IMR-90 (cell line): ENCODE measurements at regions of chr2 and their contacts with region 1.

Region 1: DNA sequence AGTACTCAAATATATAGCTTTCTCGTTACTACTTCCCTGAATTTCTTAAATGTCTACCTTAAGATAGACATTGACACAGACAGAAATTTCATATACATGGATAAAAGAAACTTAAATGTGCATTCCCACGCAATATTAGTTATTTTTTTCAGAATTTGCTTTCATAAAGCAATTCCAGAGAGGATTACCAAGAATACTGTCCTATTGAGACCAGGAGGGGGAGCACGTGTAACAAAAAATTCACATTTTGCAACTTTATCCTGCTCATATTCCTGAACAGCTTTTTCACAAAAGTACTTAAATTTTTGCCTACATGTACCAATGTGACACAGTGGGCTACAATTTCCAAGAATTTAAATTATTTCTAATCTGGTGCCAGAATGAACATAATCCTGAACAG is 30.7 kb upstream of the ERCC3 start:
- DNase-seq: peak; percentile 68
- ATAC-seq: peak; percentile 28; the same call in 1 of the 2 replicates
- H3K4me3 ChIP-seq: no peak overlapping the region
- H3K27ac ChIP-seq: no peak overlapping the region
- H3K4me1 ChIP-seq: peaks cover 3% of the 10 kb centered on the region
- H3K27me3 ChIP-seq: no peaks in the 10 kb centered on the region
- CTCF ChIP-seq: peak; percentile 70
- POLR2A ChIP-seq: no peak
- RAD21 ChIP-seq: peak; percentile 71

Region 2: DNA sequence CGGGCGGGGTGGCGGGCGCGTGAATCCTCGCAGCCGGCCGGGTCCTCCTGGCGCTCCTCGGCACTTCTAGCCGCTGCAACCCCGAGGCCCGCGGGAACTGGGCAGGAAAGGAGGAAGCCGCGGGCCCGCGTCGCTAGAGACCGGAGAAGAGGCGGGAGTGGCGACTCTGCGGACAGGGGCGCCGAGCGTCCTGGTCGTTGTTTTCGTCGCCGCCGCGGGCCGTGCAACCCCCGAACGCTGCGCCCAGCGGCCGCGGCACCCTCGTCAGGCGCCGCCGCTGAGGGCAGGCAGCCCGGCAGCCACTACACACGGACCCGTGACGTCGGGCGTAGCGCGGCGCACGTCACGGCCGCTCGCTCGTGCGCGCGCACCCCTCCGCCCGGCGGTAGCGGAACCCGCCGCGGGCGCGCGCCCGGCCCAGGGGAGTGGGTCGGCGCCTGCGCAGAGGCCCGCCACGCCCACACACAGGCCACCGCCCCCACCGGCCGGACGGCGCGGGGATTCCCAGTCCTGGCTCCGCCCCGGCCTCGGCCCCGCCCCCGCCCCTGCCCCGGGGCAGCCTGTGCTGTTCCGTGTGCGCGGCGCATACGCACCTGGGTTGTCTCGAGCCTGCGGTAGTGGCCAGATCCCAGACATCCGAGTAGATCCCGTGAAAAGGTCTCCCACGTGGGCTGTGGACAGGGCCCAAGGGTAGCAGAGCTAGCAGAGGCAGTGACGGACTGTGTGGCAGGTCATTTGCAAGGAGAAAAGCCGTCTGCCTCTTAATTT is 63.2 kb after region 1 on chr2 and contains the start of gene MAP3K2:
- CTCF ChIA-PET with region 1: no interaction called
- POLR2A ChIA-PET with region 1: no interaction called
- dilution Hi-C with region 1: no loop called
- in situ Hi-C with region 1: no loop called
- intact Hi-C with region 1: loop called (anchors 1 kb)
- DNase-seq: peak; percentile 90
- ATAC-seq: peak; percentile 92
- H3K4me3 ChIP-seq: peak within 1 kb of the TSS; percentile 98
- H3K27ac ChIP-seq: peak within 1 kb of the TSS; percentile 95
- H3K4me1 ChIP-seq: peaks cover 5% of the 10 kb centered on the region
- H3K27me3 ChIP-seq: no peaks in the 10 kb centered on the region
- CTCF ChIP-seq: peak; percentile 8; the same call in 1 of the 2 replicates
- POLR2A ChIP-seq: peak; percentile 95
- RAD21 ChIP-seq: no peak; the same call in 1 of the 2 replicates
- total RNA-seq, gene MAP3K2: 30.8 and 31.9 TPM in 2 replicates